Prostate gland (tissue), 2 donors: ENCODE measurements at regions of chr6 and their contacts with region 1.

Region 1: GRCh38 chr6:32796848-32797776 is 19.7 kb downstream of the HLA-DOB start:
- DNase-seq: peak; percentile 58
- H3K4me3 ChIP-seq: no peak overlapping the region
- H3K27ac ChIP-seq: no peak overlapping the region
- H3K4me1 ChIP-seq: no peaks in the 10 kb centered on the region
- H3K27me3 ChIP-seq: no peaks in the 10 kb centered on the region
- CTCF ChIP-seq: peak; percentile 85 to 94 (median 88)
- POLR2A ChIP-seq: no peak

Region 2: DNA sequence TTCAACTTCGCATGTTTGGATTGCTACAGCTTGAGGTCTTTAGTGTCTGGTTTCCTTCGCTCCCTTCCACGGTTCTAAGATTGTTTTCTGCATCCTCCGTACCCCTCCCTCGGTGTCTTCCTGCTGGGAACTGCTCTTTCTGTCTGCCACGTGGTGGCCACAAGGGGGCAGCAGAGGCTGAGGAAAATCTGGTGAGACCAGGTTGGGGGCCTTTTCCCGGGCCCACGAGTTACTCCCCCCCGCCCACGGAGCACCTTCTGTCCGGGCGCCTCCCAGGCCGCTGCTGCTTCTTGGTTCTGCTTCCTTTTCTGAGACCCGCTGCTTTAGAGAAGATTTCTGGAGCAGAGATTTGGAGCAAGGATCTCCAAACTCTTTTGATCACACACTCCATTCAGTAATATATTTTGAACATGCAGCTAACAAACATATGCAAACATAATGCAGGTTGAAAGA is 552.1 kb before region 1 on chr6:
- intact Hi-C with region 1: loop called (anchors 10 kb)
- DNase-seq: peak; percentile 71
- H3K4me3 ChIP-seq: no peak overlapping the region
- H3K27ac ChIP-seq: peak overlapping the region; percentile 53 to 66
- H3K4me1 ChIP-seq: no peaks in the 10 kb centered on the region
- H3K27me3 ChIP-seq: no peaks in the 10 kb centered on the region
- CTCF ChIP-seq: peak; percentile 91 to 94 (median 92)
- POLR2A ChIP-seq: no peak

Region 3: DNA sequence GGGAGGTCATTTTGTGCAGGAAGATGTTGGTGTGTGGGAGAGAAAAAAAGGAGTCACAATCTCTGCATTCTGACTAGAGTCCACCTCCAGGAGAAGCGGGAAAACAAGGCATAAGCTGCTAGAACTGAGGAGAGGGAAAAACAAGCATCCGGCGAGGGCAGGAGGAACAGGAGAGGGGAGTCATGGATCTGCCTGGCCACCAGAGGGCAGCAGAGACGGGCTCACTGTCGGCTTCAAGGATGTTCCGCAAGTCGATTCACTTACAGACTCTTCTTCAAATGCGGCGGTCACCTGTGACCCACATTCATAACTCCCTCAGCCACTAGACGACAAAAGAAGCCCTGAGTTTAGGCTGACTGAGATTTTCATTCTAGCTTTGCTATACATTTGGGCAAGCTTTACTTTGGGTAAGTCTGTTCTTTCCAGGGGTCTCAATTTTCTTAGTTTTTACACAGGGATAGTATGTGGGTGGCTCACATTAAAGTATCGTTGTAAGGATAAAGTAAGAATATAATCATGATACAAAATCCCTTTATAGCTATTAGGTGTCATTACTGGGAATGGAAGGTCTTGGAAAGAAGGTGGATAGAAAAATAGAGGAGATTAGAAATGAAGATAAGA is 383.6 kb before region 1 on chr6:
- intact Hi-C with region 1: loop called (anchors 5 kb)
- DNase-seq: peak; percentile 75
- H3K4me3 ChIP-seq: no peak overlapping the region
- H3K27ac ChIP-seq: no peak overlapping the region
- H3K4me1 ChIP-seq: no peaks in the 10 kb centered on the region
- H3K27me3 ChIP-seq: no peaks in the 10 kb centered on the region
- CTCF ChIP-seq: peak; percentile 78 to 92 (median 88)
- POLR2A ChIP-seq: no peak

Region 4: GRCh38 chr6:32424589-32425300 is 372.4 kb before region 1 on chr6:
- intact Hi-C with region 1: loop called (anchors 5 kb)
- DNase-seq: no peak
- H3K4me3 ChIP-seq: no peak overlapping the region
- H3K27ac ChIP-seq: no peak overlapping the region
- H3K4me1 ChIP-seq: no peaks in the 10 kb centered on the region
- H3K27me3 ChIP-seq: peaks cover 2% of the 10 kb centered on the region
- CTCF ChIP-seq: no peak
- POLR2A ChIP-seq: no peak

Region 5: DNA sequence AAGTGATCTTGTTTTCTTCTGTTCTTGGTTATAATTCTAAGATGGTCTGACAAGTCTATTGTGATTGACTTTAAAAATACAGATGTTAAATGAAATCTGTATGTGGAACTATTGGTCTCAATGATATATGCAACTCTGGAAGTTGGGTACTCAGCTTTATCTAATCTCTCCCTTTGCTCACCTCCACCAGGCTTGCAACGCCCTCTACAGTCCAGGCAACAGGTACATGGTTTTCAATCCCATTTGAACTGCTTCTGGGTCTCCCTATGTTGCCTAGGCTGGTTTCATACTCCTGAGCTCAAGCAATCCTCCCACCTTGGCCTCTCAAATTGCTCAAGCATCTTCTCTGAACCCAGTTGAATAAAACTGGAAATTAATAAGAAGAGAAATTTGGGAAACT is 105.1 kb before region 1 on chr6:
- intact Hi-C with region 1: loop called (anchors 10 kb)
- DNase-seq: peak; percentile 33
- H3K4me3 ChIP-seq: no peak overlapping the region
- H3K27ac ChIP-seq: no peak overlapping the region
- H3K4me1 ChIP-seq: no peaks in the 10 kb centered on the region
- H3K27me3 ChIP-seq: no peaks in the 10 kb centered on the region
- CTCF ChIP-seq: peak in 3 of 4 experiments; percentile 40 to 59 (median 52)
- POLR2A ChIP-seq: no peak

Region 6: GRCh38 chr6:32718879-32719278 is 78.2 kb before region 1 on chr6:
- intact Hi-C with region 1: no loop called
- DNase-seq: no peak
- H3K4me3 ChIP-seq: no peak overlapping the region
- H3K27ac ChIP-seq: no peak overlapping the region
- H3K4me1 ChIP-seq: no peaks in the 10 kb centered on the region
- H3K27me3 ChIP-seq: no peaks in the 10 kb centered on the region
- CTCF ChIP-seq: no peak
- POLR2A ChIP-seq: no peak